Common myeloid progenitor, CD34-positive (primary cell): ENCODE measurements at regions of chr3 and their contacts with region 1.

Region 1: GRCh38 chr3:151101270-151101969 is 16.0 kb downstream of the MED12L start:
- DNase-seq: peak in 2 of 3 donors; percentile 41 to 61
- H3K4me3 ChIP-seq: no peak overlapping the region
- H3K27ac ChIP-seq: no peak overlapping the region
- H3K4me1 ChIP-seq: peaks cover 0 to 44% (median 21%) of the 10 kb centered on the region in 4 experiments
- H3K27me3 ChIP-seq: no peaks in the 10 kb centered on the region

Region 2: GRCh38 chr3:151135541-151136337 is 34.3 kb after region 1 on chr3:
- CTCF ChIA-PET with region 1: interaction called, 250 read pairs
- POLR2A ChIA-PET with region 1: interaction called, 11 read pairs
- DNase-seq: peak; percentile 93 to 99 (median 98)
- H3K4me3 ChIP-seq: peak overlapping the region in 4 of 7 experiments; percentile 38 to 56 (median 48)
- H3K27ac ChIP-seq: peak overlapping the region; percentile 87 to 92
- H3K4me1 ChIP-seq: peaks cover 18 to 65% (median 37%) of the 10 kb centered on the region in 4 experiments
- H3K27me3 ChIP-seq: no peaks in the 10 kb centered on the region

Region 3: DNA sequence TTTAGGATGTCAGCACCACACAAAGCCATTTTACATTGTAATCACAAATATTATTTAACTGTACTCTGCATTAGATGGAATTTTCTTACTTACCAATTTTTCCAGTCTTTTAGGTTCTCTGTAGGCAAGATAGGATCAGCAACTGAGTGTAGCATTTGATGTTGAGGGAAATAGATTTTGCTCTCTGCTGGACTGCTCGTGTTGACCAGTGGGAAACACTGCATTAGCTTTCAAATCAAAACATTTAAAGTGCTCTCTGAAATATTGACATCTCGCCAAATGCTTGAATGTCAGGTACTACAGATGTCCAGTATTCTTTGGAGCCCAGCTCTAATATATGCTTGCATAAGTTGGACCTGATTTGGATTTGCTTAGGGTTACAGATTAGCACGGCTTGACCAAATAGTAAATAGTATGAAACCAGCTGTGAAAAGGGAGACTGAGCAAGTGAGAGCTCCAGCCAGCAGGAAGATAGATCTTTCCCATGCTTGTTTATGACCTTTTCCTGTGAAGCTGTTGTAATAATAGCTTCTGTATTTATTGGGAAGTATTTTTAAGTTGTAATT is 147.4 kb after region 1 on chr3:
- CTCF ChIA-PET with region 1: no interaction called
- POLR2A ChIA-PET with region 1: no interaction called
- DNase-seq: no peak
- H3K4me3 ChIP-seq: no peak overlapping the region
- H3K27ac ChIP-seq: no peak overlapping the region
- H3K4me1 ChIP-seq: no peaks in the 10 kb centered on the region
- H3K27me3 ChIP-seq: no peaks in the 10 kb centered on the region